GM10248 (cell line): ENCODE measurements at regions of chr2 and their contacts with region 1.

Region 1: DNA sequence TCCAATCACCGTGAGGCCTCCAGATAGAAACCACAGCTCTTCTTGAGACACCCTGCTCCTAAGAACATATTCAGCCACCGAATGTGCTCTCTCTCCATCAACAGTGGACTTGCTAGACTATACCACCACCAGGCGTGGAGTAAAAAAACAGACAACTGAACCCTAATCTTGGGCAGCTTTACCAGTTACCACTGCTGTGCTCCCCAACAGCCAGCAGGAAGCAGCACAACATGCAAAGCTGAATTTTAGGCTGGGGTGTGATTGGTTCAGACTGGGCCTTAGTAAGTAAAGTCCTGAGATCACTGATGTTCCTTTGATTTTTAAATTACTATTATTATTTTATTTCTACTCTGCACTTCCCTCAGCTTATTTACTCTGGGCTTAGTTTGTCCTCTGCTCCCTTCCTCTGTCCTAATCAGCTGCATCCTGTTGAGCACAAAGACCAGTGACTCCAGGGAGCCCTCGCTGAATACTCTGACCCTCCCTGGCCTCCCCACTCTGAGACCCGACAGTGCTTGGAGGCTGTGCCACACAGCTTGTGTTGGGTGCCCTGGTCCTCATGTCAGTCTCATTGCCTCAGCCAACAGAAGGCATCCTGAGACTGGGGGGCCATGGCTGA is 21.9 kb downstream of the MRPL35 start:
- DNase-seq: peak; percentile 69
- CTCF ChIP-seq: peak; percentile 87

Region 2: DNA sequence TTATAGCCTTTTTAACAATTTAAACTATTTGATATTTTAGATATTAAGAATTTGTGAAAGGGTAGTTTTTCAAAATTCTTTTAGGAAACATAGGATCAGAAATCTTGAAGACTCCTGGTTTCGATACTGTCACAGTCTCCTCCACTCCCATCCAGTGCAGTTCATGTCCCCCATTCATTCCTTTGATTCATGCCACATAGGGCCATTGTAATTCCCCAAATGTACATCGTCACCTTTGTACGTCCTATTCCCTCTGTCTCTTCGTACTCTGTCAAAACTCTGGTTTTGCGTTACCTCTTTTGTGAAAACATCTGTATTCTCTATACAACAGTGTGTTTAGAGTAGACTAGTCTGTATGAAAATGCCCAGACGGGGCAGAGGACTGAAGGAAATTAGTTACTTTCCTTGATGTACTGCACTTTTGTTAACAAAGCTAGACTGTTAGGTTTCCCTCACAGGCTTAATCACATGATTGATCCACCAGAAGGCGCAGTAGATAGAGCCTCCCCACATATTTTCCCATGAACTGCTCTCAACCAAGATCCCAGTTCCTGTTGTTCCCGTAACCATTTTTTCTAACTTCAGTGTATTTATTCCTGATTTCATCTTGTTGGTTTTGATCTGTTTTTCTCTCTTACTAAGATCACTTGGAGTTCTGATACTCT is 19.4 kb before region 1 on chr2:
- CTCF ChIA-PET with region 1: interaction called, 22 read pairs
- POLR2A ChIA-PET with region 1: no interaction called
- DNase-seq: no peak
- CTCF ChIP-seq: no peak

Region 3: DNA sequence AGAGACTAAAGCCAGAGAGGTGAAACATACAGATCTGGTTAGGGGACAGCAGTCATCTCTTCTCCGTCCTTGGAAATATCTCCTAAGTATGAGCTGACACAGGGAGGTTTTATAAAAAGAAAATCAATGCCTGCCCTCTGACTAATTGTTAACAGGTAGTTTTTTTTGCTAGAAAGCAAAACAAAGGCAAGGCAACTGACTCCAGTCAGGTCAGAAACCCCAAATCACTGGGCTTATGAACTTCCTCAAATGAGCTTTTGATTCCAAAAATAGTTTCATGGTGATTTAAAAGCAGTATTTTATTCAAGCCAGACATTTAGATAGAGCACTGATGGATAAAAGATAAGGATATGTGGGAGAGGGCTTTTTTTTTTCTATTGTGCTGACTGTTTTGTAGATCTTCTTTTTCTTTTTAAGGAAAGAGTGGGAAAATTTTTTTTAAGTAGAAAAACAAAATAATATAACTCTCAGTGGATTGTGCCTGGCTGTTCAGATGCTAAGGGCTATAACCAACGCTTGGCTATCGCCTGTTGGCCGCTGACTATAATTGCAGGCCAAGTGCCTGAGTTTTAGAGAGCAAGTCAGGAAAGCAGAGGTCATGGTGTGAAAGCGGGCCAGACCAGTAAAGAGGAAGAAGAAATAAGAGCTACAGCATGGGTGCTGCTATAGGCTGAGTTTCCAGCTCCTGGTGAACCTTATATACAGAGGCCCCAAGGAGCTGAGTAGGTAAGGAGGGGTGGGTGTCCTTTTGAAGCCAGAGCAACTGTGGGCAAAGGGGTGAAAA is 23.0 kb after region 1 on chr2:
- CTCF ChIA-PET with region 1: interaction called, 17 read pairs
- POLR2A ChIA-PET with region 1: no interaction called
- DNase-seq: peak; percentile 54
- CTCF ChIP-seq: no peak

Region 4: DNA sequence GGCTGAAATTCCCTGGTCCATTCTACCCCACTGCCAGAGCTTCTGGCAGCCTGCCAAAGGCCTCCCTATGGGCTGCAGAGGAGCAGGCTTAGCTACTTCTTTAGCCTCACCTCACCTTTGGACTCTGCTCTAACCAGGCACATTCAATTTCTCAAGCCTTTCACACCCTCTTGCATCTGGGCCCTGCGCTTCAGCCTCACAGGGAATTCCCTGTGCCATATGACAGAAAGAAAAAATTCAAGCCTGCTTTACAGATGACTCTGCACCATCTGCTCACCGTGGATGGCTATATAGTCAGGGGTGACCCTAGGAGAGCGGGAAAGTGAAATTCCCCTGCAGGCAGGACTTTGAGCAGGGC is 53.7 kb after region 1 on chr2:
- CTCF ChIA-PET with region 1: interaction called, 11 read pairs
- POLR2A ChIA-PET with region 1: no interaction called
- DNase-seq: peak; percentile 46
- CTCF ChIP-seq: no peak

Region 5: GRCh38 chr2:86298411-86299379 is 77.5 kb after region 1 on chr2:
- CTCF ChIA-PET with region 1: interaction called, 83 read pairs
- POLR2A ChIA-PET with region 1: no interaction called
- DNase-seq: no peak
- CTCF ChIP-seq: no peak

Region 6: GRCh38 chr2:86368161-86368824 is 147.1 kb after region 1 on chr2:
- CTCF ChIA-PET with region 1: interaction called, 30 read pairs
- POLR2A ChIA-PET with region 1: no interaction called
- DNase-seq: peak; percentile 79
- CTCF ChIP-seq: peak; percentile 46